ENCODE measurements at regions of chr20 and their contacts with region 1.

Region 1: DNA sequence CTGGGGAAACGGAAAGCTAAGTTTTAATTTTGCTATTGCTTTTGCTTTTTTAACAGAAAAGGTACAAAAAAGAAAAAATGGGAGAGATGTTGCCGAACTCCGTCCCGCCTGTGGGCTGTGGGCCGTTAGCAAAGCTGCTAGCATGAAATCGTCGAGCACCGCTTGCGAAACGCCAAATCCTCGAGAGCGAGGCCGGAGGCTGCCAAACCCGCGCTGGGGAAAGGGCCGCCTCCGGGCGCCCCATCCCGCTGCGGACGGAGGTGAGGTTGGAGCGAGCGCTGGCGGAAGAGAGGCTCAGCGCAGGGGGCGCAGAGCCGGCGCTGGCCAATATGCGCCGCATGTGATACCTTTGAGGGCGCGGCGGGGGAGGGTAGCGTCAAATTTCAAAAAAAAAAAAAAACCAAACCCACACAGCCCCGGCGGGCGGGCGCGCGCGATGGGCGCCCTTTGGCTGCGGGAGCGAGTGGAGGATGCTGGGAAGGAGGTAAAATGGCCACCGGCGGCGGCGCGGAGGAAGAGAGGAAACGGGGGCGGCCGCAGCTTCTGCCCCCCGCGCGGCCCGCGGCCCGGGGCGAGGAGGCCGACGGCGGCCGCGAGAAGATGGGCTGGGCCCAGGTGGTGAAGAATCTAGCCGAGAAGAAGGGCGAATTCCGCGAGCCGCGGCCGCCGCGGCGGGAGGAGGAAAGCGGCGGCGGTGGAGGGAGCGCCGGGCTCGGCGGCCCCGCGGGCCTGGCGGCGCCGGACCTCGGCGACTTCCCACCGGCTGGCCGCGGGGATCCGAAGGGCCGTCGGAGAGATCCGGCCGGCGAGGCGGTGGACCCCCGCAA is at the start of gene ZCCHC3:
- DNase-seq: peak; percentile 63
- H3K4me3 ChIP-seq: peak within 1 kb of the TSS; percentile 98
- CTCF ChIP-seq: peak; percentile 30

Region 2: DNA sequence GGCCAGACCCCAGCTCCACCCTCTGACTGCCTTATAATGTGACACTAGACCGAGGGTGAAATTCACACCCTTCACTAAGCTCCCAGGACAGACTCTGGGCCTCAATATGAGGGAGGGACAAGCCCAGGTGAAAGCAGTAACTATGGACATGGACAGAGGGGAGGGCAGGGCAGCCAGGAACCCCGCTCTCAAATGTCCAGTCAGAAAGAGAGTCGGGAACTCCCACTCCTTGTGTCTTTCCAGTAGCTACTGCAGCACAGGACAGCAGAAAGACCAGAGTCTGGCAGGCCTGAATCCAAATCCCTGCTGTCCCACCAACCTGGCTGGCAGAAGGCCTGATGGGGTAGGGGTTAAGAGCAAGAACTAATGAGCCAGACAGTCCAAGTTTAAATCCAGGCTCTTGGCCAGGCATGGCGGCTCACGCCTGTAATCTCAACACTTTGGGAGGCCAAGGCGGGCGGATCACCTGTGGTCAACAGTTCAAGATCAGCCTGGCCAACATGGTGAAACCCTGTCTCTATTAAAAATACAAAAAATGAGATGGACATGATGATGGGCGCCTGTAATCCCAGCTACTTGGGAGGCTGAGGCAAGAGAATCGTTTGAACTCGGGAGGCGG is 13.0 kb before region 1 on chr20:
- CTCF ChIA-PET with region 1: no interaction called
- POLR2A ChIA-PET with region 1: no interaction called
- DNase-seq: no peak
- H3K4me3 ChIP-seq: no peak overlapping the region
- CTCF ChIP-seq: no peak

Region 3: GRCh38 chr20:309841-310644 is 12.7 kb after region 1 on chr20:
- CTCF ChIA-PET with region 1: interaction called, 33 read pairs
- POLR2A ChIA-PET with region 1: interaction called, 17 read pairs
- DNase-seq: peak; percentile 95
- H3K4me3 ChIP-seq: peak overlapping the region; percentile 57
- CTCF ChIP-seq: no peak

Region 4: GRCh38 chr20:324177-325044 is 27.1 kb after region 1 on chr20:
- CTCF ChIA-PET with region 1: interaction called, 12 read pairs
- POLR2A ChIA-PET with region 1: interaction called, 25 read pairs
- DNase-seq: no peak
- H3K4me3 ChIP-seq: peak overlapping the region; percentile 73
- CTCF ChIP-seq: peak; percentile 46